Endothelial cell of umbilical vein (primary cell): ENCODE measurements at regions of chr10 and their contacts with region 1.

Region 1: GRCh38 chr10:55449981-55450380 is 649.0 kb upstream of the PCDH15 start:
- DNase-seq: no peak
- H3K4me3 ChIP-seq: no peak overlapping the region
- H3K27ac ChIP-seq: no peak overlapping the region
- H3K4me1 ChIP-seq: no peaks in the 10 kb centered on the region
- H3K27me3 ChIP-seq: no peaks in the 10 kb centered on the region
- CTCF ChIP-seq: no peak
- POLR2A ChIP-seq: no peak

Region 2: GRCh38 chr10:55191236-55191858 is 258.6 kb before region 1 on chr10:
- CTCF ChIA-PET with region 1: no interaction called
- POLR2A ChIA-PET with region 1: no interaction called
- dilution Hi-C with region 1: no loop called
- intact Hi-C with region 1: no loop called
- DNase-seq: no peak
- H3K4me3 ChIP-seq: no peak overlapping the region
- H3K27ac ChIP-seq: no peak overlapping the region
- H3K4me1 ChIP-seq: no peaks in the 10 kb centered on the region
- H3K27me3 ChIP-seq: no peaks in the 10 kb centered on the region
- CTCF ChIP-seq: no peak
- POLR2A ChIP-seq: no peak

Region 3: DNA sequence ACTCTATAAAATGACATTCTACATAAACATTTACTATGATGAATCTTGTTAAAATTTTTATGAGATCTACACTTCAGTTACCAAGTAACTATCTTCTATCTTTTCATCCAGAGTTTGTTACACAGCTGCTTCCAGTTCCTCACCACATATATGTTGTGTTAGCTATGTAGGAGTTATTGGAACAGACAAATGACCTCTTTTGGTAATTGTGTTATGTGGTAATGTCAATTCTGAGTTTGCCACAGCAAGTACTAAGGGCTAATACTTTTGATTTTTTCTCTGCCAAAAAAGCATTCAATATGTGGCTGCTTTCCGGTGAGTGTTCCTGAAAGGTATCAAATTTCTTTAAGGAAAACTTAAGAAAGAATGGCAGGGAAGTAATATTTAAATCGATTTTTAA is 75.1 kb before region 1 on chr10:
- CTCF ChIA-PET with region 1: no interaction called
- POLR2A ChIA-PET with region 1: no interaction called
- dilution Hi-C with region 1: no loop called
- intact Hi-C with region 1: loop called (anchors 5 kb)
- DNase-seq: peak; percentile 38
- H3K4me3 ChIP-seq: no peak overlapping the region
- H3K27ac ChIP-seq: peak overlapping the region; percentile 48
- H3K4me1 ChIP-seq: peaks cover 18% of the 10 kb centered on the region
- H3K27me3 ChIP-seq: no peaks in the 10 kb centered on the region
- CTCF ChIP-seq: no peak
- POLR2A ChIP-seq: no peak